ENCODE measurements at regions of chr9 and their contacts with region 1.

Region 1: DNA sequence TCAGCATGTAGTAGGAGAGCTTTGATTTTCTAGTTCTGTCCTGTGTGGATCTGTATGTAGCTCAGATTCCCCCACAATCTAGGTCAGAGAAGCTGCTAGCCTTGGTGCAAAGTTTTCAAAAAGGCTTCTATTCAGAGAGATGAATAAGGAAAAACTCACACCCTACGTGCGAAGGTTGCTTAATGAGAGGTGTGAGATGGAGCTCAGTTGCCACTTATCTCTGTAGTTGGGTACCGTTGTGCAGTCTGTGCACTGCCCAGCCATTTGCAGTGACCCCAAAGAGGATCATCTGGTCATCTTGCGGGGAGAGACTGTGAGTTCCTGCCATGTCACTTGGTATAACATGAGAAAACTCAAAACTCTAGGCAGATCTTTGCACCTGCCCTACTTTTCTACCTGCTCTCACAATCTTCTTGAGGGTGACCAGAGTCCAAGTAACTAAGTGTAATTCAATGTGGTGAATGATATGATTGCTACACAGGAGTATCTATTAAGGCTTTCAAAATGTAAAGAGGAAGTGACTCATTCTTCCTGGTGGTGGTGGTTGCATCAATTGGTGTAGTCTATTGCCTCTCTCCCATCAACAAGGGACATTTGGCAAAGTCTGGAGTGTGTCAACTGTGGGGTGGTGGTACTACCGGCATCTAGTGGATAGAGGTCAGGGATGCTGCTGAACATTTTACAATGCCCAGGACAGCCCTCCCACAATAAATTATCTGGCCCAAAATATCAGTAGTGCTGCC is 65.2 kb downstream of the TMC1 start:
- DNase-seq: peak in 1 of 4 donors; percentile 50
- ATAC-seq: peak; percentile 73
- H3K4me3 ChIP-seq: no peak overlapping the region
- H3K27ac ChIP-seq: peak overlapping the region in 1 of 2 donors; percentile 53
- H3K4me1 ChIP-seq: peaks cover 0 to 48% of the 10 kb centered on the region in 2 donors
- H3K27me3 ChIP-seq: no peaks in the 10 kb centered on the region
- CTCF ChIP-seq: no peak

Region 2: GRCh38 chr9:72356041-72356582 is 230.4 kb before region 1 on chr9:
- intact Hi-C with region 1: loop called in 1 of 2 experiments (anchors 10 kb)
- DNase-seq: peak in 2 of 4 donors; percentile 19 to 55
- ATAC-seq: peak; percentile 34
- H3K4me3 ChIP-seq: no peak overlapping the region
- H3K27ac ChIP-seq: peak overlapping the region; percentile 30 to 80
- H3K4me1 ChIP-seq: peaks cover 29 to 64% of the 10 kb centered on the region in 2 donors
- H3K27me3 ChIP-seq: no peaks in the 10 kb centered on the region
- CTCF ChIP-seq: no peak

Region 3: GRCh38 chr9:72718503-72718902 is 131.9 kb after region 1 on chr9:
- intact Hi-C with region 1: no loop called
- DNase-seq: no peak
- ATAC-seq: no peak
- H3K4me3 ChIP-seq: no peak overlapping the region
- H3K27ac ChIP-seq: no peak overlapping the region
- H3K4me1 ChIP-seq: no peaks in the 10 kb centered on the region
- H3K27me3 ChIP-seq: no peaks in the 10 kb centered on the region
- CTCF ChIP-seq: no peak

Measured in left lung (tissue), 14 donors.